CD8-positive, alpha-beta T cell (primary cell): ENCODE measurements at regions of chr3 and their contacts with region 1.

Region 1: DNA sequence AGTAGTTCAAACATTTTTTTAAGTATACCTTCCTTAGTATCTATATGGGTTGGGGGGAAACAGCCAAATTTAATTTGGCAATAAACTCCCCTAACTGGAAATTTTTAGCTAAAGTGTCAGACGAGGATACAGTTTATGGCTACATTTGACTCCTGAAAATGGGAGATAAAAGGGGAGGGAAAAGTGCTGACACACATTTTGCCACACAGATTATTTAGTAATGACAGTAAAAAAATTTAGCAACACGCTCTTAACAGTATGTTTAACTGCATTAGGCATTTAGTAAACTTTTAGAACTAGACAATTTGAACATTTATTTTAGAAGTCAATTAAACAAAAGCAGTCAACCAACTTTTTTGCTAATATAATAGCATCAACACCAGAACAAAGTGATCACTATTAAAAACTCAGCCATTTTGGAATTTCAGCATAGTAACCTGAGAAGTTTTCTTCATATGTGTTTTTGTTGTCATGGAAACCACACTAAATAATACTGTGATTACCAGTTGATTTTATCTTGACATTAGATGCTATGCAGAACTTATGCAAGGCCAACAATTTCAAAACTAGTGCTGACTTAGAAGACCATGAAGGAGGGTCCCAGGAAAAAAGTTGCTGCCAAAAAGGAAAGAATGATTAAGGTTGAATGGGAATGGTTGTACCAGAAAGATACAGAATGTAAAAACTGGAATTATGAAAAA is 47.0 kb upstream of the TFG start:
- DNase-seq: no peak
- ATAC-seq: peak; percentile 47
- H3K4me3 ChIP-seq: no peak overlapping the region
- H3K4me3 Mint-ChIP-seq: no peak overlapping the region
- H3K27ac ChIP-seq: no peak overlapping the region
- H3K27ac Mint-ChIP-seq: peak overlapping the region; percentile 47
- H3K4me1 ChIP-seq: no peaks in the 10 kb centered on the region
- H3K4me1 Mint-ChIP-seq: peaks cover 11% of the 10 kb centered on the region
- H3K27me3 ChIP-seq: no peaks in the 10 kb centered on the region
- H3K27me3 Mint-ChIP-seq: no peaks in the 10 kb centered on the region
- CTCF ChIP-seq: no peak

Region 2: DNA sequence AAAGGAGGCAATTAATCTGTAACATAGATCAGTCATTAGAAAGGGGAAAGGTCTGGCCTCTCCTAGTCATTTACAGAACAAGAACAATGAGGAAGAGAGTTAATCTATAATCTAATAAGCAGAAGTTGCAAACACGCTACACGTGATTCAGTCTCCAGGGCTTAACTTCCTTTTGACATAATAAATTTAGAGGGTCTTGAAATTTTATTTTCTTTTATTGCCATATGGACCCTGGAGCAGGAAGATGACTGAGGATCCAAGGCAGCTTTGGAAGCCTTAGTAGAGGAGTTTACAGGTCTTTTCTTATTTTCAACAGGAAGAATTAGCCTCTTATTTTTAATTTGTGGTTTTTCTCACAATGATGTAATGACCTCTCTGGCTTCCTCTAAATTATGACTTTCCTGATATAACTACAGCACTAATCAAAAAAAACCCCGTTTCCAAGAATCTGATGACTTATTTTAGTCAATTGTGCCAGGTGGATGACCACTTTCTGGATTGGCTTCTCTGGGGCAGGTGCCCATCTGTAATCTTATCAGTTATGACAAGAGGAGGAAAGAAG is 20.7 kb before region 1 on chr3:
- CTCF ChIA-PET with region 1: interaction called, 5 read pairs
- POLR2A ChIA-PET with region 1: interaction called, 4 read pairs
- intact Hi-C with region 1: loop called (anchors 1 to 2 kb)
- DNase-seq: no peak
- ATAC-seq: no peak
- H3K4me3 ChIP-seq: no peak overlapping the region
- H3K4me3 Mint-ChIP-seq: no peak overlapping the region
- H3K27ac ChIP-seq: no peak overlapping the region
- H3K27ac Mint-ChIP-seq: no peak overlapping the region
- H3K4me1 ChIP-seq: no peaks in the 10 kb centered on the region
- H3K4me1 Mint-ChIP-seq: no peaks in the 10 kb centered on the region
- H3K27me3 ChIP-seq: no peaks in the 10 kb centered on the region
- H3K27me3 Mint-ChIP-seq: no peaks in the 10 kb centered on the region
- CTCF ChIP-seq: no peak

Region 3: DNA sequence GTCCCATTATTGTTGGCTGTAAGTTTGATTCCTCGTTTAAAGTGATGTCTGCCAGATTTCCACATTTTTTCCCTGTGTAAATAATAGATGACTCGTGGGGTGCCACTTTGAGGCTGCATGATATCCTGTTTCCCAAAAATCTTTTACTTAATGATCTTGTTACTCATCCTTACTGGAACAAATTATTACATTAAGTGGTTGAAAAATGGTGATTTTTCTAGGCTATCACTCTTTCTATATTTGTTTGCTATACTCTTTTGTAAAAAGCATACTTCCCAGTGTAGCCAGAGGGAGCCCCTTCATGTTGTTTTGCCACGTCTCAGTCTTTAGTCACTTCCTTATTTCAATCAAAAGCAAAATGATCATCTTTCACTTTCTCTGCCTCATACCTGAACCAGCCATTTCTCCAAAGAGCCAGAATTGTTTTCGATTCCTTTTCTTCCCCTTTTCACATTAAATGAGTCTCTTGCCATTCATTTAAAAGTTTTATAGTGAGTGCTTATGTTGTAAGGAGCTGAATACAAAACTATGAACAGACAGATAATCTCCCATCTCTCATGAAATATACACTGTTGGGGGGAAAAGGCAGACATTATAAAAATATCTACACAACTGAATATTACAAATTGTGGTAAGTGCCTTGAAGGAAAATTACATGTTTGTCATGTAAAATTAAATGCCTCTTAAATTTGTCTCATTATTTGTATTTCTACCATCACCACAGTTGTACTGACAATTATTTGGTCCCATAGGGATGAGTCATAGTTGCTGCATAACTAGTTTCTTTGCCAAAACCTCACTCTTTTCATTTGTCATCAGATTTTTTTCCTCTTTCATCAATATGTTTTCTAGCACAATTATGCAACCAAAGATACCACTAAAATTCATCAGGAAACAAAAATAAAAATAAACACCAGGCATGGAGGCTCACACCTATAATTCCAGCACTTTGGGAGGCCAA is 11.3 kb before region 1 on chr3:
- CTCF ChIA-PET with region 1: no interaction called
- POLR2A ChIA-PET with region 1: interaction called, 4 read pairs
- intact Hi-C with region 1: loop called in 1 of 2 experiments (anchors 1 kb)
- DNase-seq: peak in 2 of 9 experiments; percentile 12 to 36
- ATAC-seq: peak; percentile 86
- H3K4me3 ChIP-seq: no peak overlapping the region
- H3K4me3 Mint-ChIP-seq: peak overlapping the region; percentile 16
- H3K27ac ChIP-seq: no peak overlapping the region
- H3K27ac Mint-ChIP-seq: peak overlapping the region; percentile 60
- H3K4me1 ChIP-seq: no peaks in the 10 kb centered on the region
- H3K4me1 Mint-ChIP-seq: peaks cover 9% of the 10 kb centered on the region
- H3K27me3 ChIP-seq: no peaks in the 10 kb centered on the region
- H3K27me3 Mint-ChIP-seq: no peaks in the 10 kb centered on the region
- CTCF ChIP-seq: no peak

Region 4: DNA sequence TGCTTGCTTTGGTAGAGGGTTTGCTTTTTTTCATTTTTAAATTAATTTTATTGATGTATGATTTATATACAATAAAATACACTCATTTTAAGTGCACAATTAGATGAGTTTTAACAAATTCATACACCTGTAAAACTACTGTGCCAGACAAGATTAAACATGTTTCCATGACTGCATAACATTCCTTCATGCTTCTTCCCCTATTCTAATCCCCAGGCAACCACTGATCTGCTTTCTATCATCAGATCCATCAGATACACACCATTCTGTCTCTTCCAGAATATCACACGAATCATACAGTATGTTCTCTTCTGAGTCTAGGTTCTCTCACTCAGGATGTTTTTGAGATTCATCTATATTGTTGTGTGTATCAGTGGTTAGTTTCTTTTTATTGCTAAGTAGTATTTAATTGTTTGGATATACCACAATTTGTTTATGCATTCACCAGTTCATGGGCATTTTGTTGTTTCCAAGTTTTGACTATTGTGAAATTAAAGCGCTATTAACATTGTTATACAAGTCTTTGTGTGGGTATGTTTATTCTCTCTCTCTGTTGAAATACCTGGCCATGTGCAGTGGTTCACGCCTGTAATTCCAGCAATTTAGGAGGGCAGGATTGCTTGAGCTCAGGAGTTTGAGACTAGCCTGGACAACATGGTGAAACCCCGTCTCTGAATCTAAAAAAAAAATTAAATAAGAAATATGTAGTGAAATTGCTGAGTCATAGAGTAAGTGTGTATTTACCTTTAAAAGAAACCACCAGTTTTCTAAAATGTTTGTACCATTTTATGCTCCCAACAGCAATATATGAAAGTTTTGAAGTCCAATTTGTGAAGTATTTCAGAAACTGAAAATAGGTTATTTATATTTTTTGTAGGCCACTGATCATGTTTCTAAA is 40.1 kb after region 1 on chr3:
- CTCF ChIA-PET with region 1: no interaction called
- POLR2A ChIA-PET with region 1: no interaction called
- intact Hi-C with region 1: loop called in 1 of 2 experiments (anchors 5 kb)
- DNase-seq: no peak
- ATAC-seq: no peak
- H3K4me3 ChIP-seq: no peak overlapping the region
- H3K4me3 Mint-ChIP-seq: no peak overlapping the region
- H3K27ac ChIP-seq: no peak overlapping the region
- H3K27ac Mint-ChIP-seq: no peak overlapping the region
- H3K4me1 ChIP-seq: no peaks in the 10 kb centered on the region
- H3K4me1 Mint-ChIP-seq: no peaks in the 10 kb centered on the region
- H3K27me3 ChIP-seq: no peaks in the 10 kb centered on the region
- H3K27me3 Mint-ChIP-seq: peaks cover 3% of the 10 kb centered on the region
- CTCF ChIP-seq: no peak

Region 5: DNA sequence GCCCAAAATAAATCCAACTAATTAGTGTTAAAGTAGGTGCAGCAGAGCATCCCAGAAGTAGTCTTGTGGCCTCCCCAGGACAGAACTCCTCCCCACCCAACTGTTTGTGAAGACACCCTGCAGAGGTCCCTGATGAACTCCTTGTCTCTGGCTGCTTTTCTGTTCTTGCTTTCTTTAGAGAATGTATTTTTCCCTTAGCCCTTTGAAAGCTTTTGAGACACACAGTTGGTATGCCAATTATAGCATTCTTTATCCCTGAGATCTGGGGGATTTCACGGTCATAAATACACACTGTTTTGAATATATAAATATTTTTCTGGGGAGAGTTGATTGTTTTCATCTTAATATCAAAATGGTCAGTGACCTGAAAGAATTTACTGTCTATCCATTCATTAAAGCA is 56.9 kb after region 1 on chr3:
- CTCF ChIA-PET with region 1: interaction called, 5 read pairs
- POLR2A ChIA-PET with region 1: no interaction called
- intact Hi-C with region 1: loop called in 1 of 2 experiments (anchors 2 kb)
- DNase-seq: no peak
- ATAC-seq: no peak
- H3K4me3 ChIP-seq: no peak overlapping the region
- H3K4me3 Mint-ChIP-seq: no peak overlapping the region
- H3K27ac ChIP-seq: no peak overlapping the region
- H3K27ac Mint-ChIP-seq: no peak overlapping the region
- H3K4me1 ChIP-seq: peaks cover 20% of the 10 kb centered on the region
- H3K4me1 Mint-ChIP-seq: peaks cover 39% of the 10 kb centered on the region
- H3K27me3 ChIP-seq: no peaks in the 10 kb centered on the region
- H3K27me3 Mint-ChIP-seq: no peaks in the 10 kb centered on the region
- CTCF ChIP-seq: no peak

Region 6: DNA sequence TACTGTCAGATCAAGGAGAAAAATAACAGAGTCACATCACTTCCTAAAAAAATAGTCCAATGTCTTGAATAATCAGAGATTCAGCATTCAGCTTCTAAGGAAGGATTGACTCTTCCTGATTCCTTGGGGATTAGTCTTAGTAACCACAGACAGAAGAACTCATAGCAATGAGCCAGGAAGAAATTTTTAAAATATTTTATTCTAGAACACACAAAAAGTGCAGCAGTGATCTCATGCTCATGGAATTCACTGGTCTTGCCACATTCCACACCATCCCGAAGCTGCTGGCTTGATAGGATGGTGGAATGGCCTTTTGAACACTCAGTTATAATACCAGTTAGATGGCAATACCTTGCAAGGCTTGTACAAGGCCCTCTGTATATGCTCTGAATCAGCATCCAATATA is 374.0 kb after region 1 on chr3:
- CTCF ChIA-PET with region 1: no interaction called
- POLR2A ChIA-PET with region 1: no interaction called
- intact Hi-C with region 1: no loop called
- DNase-seq: no peak
- ATAC-seq: no peak
- H3K4me3 ChIP-seq: no peak overlapping the region
- H3K4me3 Mint-ChIP-seq: no peak overlapping the region
- H3K27ac ChIP-seq: no peak overlapping the region
- H3K27ac Mint-ChIP-seq: no peak overlapping the region
- H3K4me1 ChIP-seq: no peaks in the 10 kb centered on the region
- H3K4me1 Mint-ChIP-seq: no peaks in the 10 kb centered on the region
- H3K27me3 ChIP-seq: no peaks in the 10 kb centered on the region
- H3K27me3 Mint-ChIP-seq: peaks cover 4% of the 10 kb centered on the region
- CTCF ChIP-seq: no peak